ENCODE measurements at regions of chr7 and their contacts with region 1.

Region 1: GRCh38 chr7:26964156-26964808 is 99.9 kb upstream of the SKAP2 start:
- DNase-seq: no peak
- H3K4me3 ChIP-seq: no peak overlapping the region
- H3K27ac ChIP-seq: no peak overlapping the region
- H3K27me3 ChIP-seq: no peaks in the 10 kb centered on the region
- CTCF ChIP-seq: no peak

Region 2: GRCh38 chr7:26868841-26869505 is 95.3 kb before region 1 on chr7:
- CTCF ChIA-PET with region 1: no interaction called
- POLR2A ChIA-PET with region 1: no interaction called
- DNase-seq: no peak
- H3K4me3 ChIP-seq: no peak overlapping the region
- H3K27ac ChIP-seq: no peak overlapping the region
- H3K27me3 ChIP-seq: no peaks in the 10 kb centered on the region
- CTCF ChIP-seq: no peak

Region 3: DNA sequence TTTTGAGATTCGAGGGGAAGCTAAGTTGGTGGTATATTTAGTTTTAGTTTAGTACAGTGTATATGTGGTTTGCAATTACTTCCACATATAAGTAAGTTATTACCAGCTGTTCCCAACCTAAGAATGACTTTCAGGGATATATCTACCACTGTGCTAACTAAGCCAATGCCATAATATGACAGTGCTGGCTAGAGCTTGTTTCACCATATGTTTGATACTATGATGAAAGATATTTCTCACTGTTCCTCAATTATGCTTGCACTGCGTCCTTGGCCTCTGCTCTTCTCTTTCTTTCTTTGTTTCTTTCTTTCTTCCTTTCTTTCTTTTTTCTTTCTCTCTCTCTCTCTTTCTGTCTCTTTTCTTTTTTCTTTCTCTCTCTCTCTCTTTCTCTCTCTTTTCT is 13.9 kb after region 1 on chr7:
- CTCF ChIA-PET with region 1: no interaction called
- POLR2A ChIA-PET with region 1: no interaction called
- DNase-seq: no peak
- H3K4me3 ChIP-seq: no peak overlapping the region
- H3K27ac ChIP-seq: no peak overlapping the region
- H3K27me3 ChIP-seq: peaks cover 9% of the 10 kb centered on the region
- CTCF ChIP-seq: no peak

Region 4: GRCh38 chr7:27010068-27010467 is 45.8 kb after region 1 on chr7:
- CTCF ChIA-PET with region 1: no interaction called
- POLR2A ChIA-PET with region 1: interaction called, 11 read pairs
- DNase-seq: no peak
- H3K4me3 ChIP-seq: no peak overlapping the region
- H3K27ac ChIP-seq: no peak overlapping the region
- H3K27me3 ChIP-seq: no peaks in the 10 kb centered on the region
- CTCF ChIP-seq: no peak